IMR-90 (cell line): ENCODE measurements at regions of chr1 and their contacts with region 1.

Region 1: GRCh38 chr1:86833461-86834215 is 80.3 kb downstream of the SELENOF start:
- DNase-seq: peak; percentile 87
- ATAC-seq: peak; percentile 97
- H3K4me3 ChIP-seq: no peak overlapping the region
- H3K27ac ChIP-seq: no peak overlapping the region
- H3K4me1 ChIP-seq: no peaks in the 10 kb centered on the region
- H3K27me3 ChIP-seq: no peaks in the 10 kb centered on the region
- CTCF ChIP-seq: peak; percentile 79
- POLR2A ChIP-seq: no peak
- RAD21 ChIP-seq: peak; percentile 81

Region 2: GRCh38 chr1:86779308-86780191 is 54.1 kb before region 1 on chr1:
- CTCF ChIA-PET with region 1: interaction called, 4 read pairs
- POLR2A ChIA-PET with region 1: no interaction called
- dilution Hi-C with region 1: no loop called
- in situ Hi-C with region 1: no loop called
- intact Hi-C with region 1: loop called (anchors 1 kb)
- DNase-seq: peak; percentile 92
- ATAC-seq: peak; percentile 48
- H3K4me3 ChIP-seq: no peak overlapping the region
- H3K27ac ChIP-seq: peak overlapping the region; percentile 6; the same call in 1 of the 2 replicates
- H3K4me1 ChIP-seq: peaks cover 19% of the 10 kb centered on the region
- H3K27me3 ChIP-seq: no peaks in the 10 kb centered on the region
- CTCF ChIP-seq: no peak
- POLR2A ChIP-seq: no peak
- RAD21 ChIP-seq: no peak

Region 3: DNA sequence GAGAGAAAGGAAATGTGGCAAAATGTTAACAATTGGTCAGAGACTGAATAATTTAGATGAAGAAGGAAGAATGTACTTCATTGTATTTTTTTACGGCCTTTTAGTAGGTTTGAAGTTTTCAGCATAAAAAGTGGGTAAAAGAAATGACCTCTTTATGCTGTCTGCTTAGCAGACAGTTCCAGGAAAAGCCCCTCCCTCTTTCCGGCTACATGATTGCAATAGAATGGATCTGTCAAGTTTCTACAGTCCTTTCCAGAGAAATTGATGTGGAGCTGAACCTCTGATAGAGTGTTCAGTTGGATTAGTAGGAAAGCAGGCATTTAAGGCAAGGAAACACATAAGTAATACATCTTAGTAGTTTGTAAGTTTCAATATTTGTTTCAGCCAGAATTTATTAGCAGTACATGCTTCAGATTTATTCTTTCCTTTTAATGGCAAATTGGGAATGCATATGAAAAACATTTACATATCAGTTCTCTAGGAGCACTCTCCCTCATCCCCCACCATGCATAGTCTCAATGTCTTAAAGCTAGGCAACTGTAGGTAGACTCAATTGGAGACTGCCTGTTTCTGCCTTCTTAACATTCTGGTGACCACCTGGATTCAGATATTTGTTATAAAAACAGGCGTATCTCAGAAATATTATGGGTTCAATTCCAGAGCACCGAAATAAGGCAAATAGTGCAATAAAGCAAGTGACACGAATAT is 117.2 kb after region 1 on chr1:
- CTCF ChIA-PET with region 1: no interaction called
- POLR2A ChIA-PET with region 1: no interaction called
- dilution Hi-C with region 1: no loop called
- in situ Hi-C with region 1: loop called (anchors 10 kb)
- intact Hi-C with region 1: no loop called
- DNase-seq: no peak
- ATAC-seq: no peak; the same call in 1 of the 2 replicates
- H3K4me3 ChIP-seq: no peak overlapping the region
- H3K27ac ChIP-seq: no peak overlapping the region
- H3K4me1 ChIP-seq: 0 out of 2 replicates have a peak, but pooled peaks cover 2% of the 10 kb centered on the region
- H3K27me3 ChIP-seq: no peaks in the 10 kb centered on the region
- CTCF ChIP-seq: no peak
- POLR2A ChIP-seq: no peak
- RAD21 ChIP-seq: no peak